CD4-positive, alpha-beta memory T cell (primary cell): ENCODE measurements at regions of chr4 and their contacts with region 1.

Region 1: GRCh38 chr4:3193531-3194203 is 55.3 kb upstream of the MSANTD1 start:
- DNase-seq: peak in 4 of 5 donors; percentile 40 to 48 (median 46)
- H3K4me3 ChIP-seq: no peak overlapping the region
- H3K4me3 Mint-ChIP-seq: no peak overlapping the region
- H3K27ac ChIP-seq: no peak overlapping the region
- H3K27ac Mint-ChIP-seq: peak overlapping the region in 3 of 7 donors; percentile 18 to 49 (median 19)
- H3K4me1 ChIP-seq: peaks cover 52% of the 10 kb centered on the region
- H3K4me1 Mint-ChIP-seq: peaks cover 42 to 68% (median 56%) of the 10 kb centered on the region in 4 donors
- H3K27me3 ChIP-seq: no peaks in the 10 kb centered on the region
- H3K27me3 Mint-ChIP-seq: no peaks in the 10 kb centered on the region

Region 2: GRCh38 chr4:3210467-3210866 is 16.8 kb after region 1 on chr4:
- CTCF ChIA-PET with region 1: interaction called, 18 read pairs
- POLR2A ChIA-PET with region 1: no interaction called
- intact Hi-C with region 1: no loop called
- DNase-seq: no peak
- H3K4me3 ChIP-seq: no peak overlapping the region
- H3K4me3 Mint-ChIP-seq: no peak overlapping the region
- H3K27ac ChIP-seq: no peak overlapping the region
- H3K27ac Mint-ChIP-seq: no peak overlapping the region
- H3K4me1 ChIP-seq: no peaks in the 10 kb centered on the region
- H3K4me1 Mint-ChIP-seq: no peaks in the 10 kb centered on the region
- H3K27me3 ChIP-seq: no peaks in the 10 kb centered on the region
- H3K27me3 Mint-ChIP-seq: no peaks in the 10 kb centered on the region

Region 3: DNA sequence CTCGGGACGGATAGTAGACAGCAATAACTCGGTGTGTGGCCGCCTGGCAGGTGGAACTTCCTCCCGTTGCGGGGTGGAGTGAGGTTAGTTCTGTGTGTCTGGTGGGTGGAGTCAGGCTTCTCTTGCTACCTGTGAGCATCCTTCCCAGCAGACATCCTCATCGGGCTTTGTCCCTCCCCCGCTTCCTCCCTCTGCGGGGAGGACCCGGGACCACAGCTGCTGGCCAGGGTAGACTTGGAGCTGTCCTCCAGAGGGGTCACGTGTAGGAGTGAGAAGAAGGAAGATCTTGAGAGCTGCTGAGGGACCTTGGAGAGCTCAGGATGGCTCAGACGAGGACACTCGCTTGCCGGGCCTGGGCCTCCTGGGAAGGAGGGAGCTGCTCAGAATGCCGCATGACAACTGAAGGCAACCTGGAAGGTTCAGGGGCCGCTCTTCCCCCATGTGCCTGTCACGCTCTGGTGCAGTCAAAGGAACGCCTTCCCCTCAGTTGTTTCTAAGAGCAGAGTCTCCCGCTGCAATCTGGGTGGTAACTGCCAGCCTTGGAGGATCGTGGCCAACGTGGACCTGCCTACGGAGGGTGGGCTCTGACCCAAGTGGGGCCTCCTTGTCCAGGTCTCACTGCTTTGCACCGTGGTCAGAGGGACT is 49.6 kb after region 1 on chr4:
- CTCF ChIA-PET with region 1: interaction called, 13 read pairs
- POLR2A ChIA-PET with region 1: no interaction called
- intact Hi-C with region 1: no loop called
- DNase-seq: peak in 2 of 5 donors; percentile 12 to 15
- H3K4me3 ChIP-seq: no peak overlapping the region
- H3K4me3 Mint-ChIP-seq: no peak overlapping the region
- H3K27ac ChIP-seq: no peak overlapping the region
- H3K27ac Mint-ChIP-seq: peak overlapping the region in 4 of 7 donors; percentile 64 to 75 (median 66)
- H3K4me1 ChIP-seq: peaks cover 11% of the 10 kb centered on the region
- H3K4me1 Mint-ChIP-seq: peaks cover 11 to 18% (median 15%) of the 10 kb centered on the region in 4 donors
- H3K27me3 ChIP-seq: no peaks in the 10 kb centered on the region
- H3K27me3 Mint-ChIP-seq: no peaks in the 10 kb centered on the region

Region 4: DNA sequence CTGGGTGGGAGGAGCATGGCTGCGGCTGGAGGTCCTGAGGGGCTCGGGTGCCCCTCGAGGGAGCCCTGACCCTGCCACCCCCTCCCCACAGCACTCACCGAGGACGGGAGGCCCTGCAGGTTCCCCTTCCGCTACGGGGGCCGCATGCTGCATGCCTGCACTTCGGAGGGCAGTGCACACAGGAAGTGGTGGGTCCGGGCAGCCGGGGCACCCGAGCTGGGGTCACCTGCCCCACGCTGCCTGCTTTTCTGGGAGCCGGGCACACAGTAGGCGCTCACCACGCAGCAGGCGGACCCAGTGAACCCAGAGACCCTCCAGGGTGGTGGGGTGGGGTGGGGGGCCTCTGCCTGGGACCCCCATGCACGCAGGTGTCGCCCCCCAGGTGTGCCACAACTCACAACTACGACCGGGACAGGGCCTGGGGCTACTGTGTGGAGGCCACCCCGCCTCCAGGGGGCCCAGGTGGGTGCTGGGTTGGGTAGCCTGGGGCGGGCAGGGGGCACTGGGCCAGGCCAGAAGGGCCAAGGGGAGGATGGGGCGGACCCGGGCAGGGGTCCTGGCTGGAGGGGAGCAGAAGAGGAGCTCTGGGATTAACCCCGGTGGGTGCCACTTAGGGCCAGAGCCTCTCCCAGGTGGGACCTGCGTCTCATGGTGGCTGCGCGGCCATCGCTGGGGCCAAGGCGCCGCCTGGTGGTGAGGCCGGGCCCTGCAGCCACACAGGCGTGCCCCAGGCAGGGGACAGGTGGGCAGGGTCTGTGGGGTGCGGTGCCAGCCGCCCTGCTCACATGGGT is 249.5 kb after region 1 on chr4:
- CTCF ChIA-PET with region 1: interaction called, 15 read pairs
- POLR2A ChIA-PET with region 1: no interaction called
- intact Hi-C with region 1: no loop called
- DNase-seq: peak in 4 of 5 donors; percentile 58 to 69 (median 61)
- H3K4me3 ChIP-seq: no peak overlapping the region
- H3K4me3 Mint-ChIP-seq: no peak overlapping the region
- H3K27ac ChIP-seq: no peak overlapping the region
- H3K27ac Mint-ChIP-seq: no peak overlapping the region
- H3K4me1 ChIP-seq: no peaks in the 10 kb centered on the region
- H3K4me1 Mint-ChIP-seq: no peaks in the 10 kb centered on the region
- H3K27me3 ChIP-seq: no peaks in the 10 kb centered on the region
- H3K27me3 Mint-ChIP-seq: no peaks in the 10 kb centered on the region

Region 5: GRCh38 chr4:3480528-3481112 is 287.0 kb after region 1 on chr4:
- CTCF ChIA-PET with region 1: interaction called, 35 read pairs
- POLR2A ChIA-PET with region 1: no interaction called
- intact Hi-C with region 1: no loop called
- DNase-seq: peak in 4 of 5 donors; percentile 54 to 67 (median 62)
- H3K4me3 ChIP-seq: no peak overlapping the region
- H3K4me3 Mint-ChIP-seq: no peak overlapping the region
- H3K27ac ChIP-seq: no peak overlapping the region
- H3K27ac Mint-ChIP-seq: peak overlapping the region in 1 of 7 donors; percentile 12
- H3K4me1 ChIP-seq: peaks cover 7% of the 10 kb centered on the region
- H3K4me1 Mint-ChIP-seq: peaks cover 0 to 4% (median under 1%) of the 10 kb centered on the region in 4 donors
- H3K27me3 ChIP-seq: no peaks in the 10 kb centered on the region
- H3K27me3 Mint-ChIP-seq: peaks cover 13 to 14% of the 10 kb centered on the region in 2 donors